ENCODE measurements at regions of chr6 and their contacts with region 1.

Region 1: GRCh38 chr6:159042003-159042825 is 2.6 kb downstream of the TAGAP start:
- DNase-seq: peak; percentile 62 to 95
- ATAC-seq: peak; percentile 43 to 75 (median 56)
- H3K4me3 ChIP-seq: peak overlapping the region; percentile 61
- H3K4me3 Mint-ChIP-seq: peak overlapping the region; percentile 98
- H3K27ac ChIP-seq: peak overlapping the region; percentile 87
- H3K27ac Mint-ChIP-seq: peak overlapping the region; percentile 97
- H3K4me1 ChIP-seq: peaks cover 53% of the 10 kb centered on the region
- H3K4me1 Mint-ChIP-seq: peaks cover 74 to 75% of the 10 kb centered on the region in 2 donors
- H3K27me3 ChIP-seq: no peaks in the 10 kb centered on the region
- H3K27me3 Mint-ChIP-seq: no peaks in the 10 kb centered on the region
- CTCF ChIP-seq: peak; percentile 99

Region 2: GRCh38 chr6:157148391-157149323 is 1893.6 kb before region 1 on chr6:
- intact Hi-C with region 1: loop called (anchors 10 kb)
- DNase-seq: no peak
- ATAC-seq: no peak
- H3K4me3 ChIP-seq: no peak overlapping the region
- H3K4me3 Mint-ChIP-seq: peak overlapping the region; percentile 75
- H3K27ac ChIP-seq: no peak overlapping the region
- H3K27ac Mint-ChIP-seq: peak overlapping the region; percentile 82 to 83
- H3K4me1 ChIP-seq: peaks cover 33% of the 10 kb centered on the region
- H3K4me1 Mint-ChIP-seq: peaks cover 40 to 44% of the 10 kb centered on the region in 2 donors
- H3K27me3 ChIP-seq: no peaks in the 10 kb centered on the region
- H3K27me3 Mint-ChIP-seq: no peaks in the 10 kb centered on the region
- CTCF ChIP-seq: no peak

Region 3: GRCh38 chr6:158649289-158650143 is 392.7 kb before region 1 on chr6 and contains the start of gene SYTL3:
- intact Hi-C with region 1: loop called (anchors 1 kb)
- DNase-seq: peak; percentile 62 to 95
- ATAC-seq: peak; percentile 47 to 73 (median 60)
- H3K4me3 ChIP-seq: peak within 1 kb of the TSS; percentile 41
- H3K4me3 Mint-ChIP-seq: peak within 1 kb of the TSS; percentile 87
- H3K27ac ChIP-seq: peak within 1 kb of the TSS; percentile 84
- H3K27ac Mint-ChIP-seq: peak within 1 kb of the TSS; percentile 96 to 99
- H3K4me1 ChIP-seq: peaks cover 66% of the 10 kb centered on the region
- H3K4me1 Mint-ChIP-seq: peaks cover 57 to 62% of the 10 kb centered on the region in 2 donors
- H3K27me3 ChIP-seq: no peaks in the 10 kb centered on the region
- H3K27me3 Mint-ChIP-seq: no peaks in the 10 kb centered on the region
- CTCF ChIP-seq: no peak
- total RNA-seq, gene SYTL3: 84.1 to 143 (median 89.0) TPM

Region 4: DNA sequence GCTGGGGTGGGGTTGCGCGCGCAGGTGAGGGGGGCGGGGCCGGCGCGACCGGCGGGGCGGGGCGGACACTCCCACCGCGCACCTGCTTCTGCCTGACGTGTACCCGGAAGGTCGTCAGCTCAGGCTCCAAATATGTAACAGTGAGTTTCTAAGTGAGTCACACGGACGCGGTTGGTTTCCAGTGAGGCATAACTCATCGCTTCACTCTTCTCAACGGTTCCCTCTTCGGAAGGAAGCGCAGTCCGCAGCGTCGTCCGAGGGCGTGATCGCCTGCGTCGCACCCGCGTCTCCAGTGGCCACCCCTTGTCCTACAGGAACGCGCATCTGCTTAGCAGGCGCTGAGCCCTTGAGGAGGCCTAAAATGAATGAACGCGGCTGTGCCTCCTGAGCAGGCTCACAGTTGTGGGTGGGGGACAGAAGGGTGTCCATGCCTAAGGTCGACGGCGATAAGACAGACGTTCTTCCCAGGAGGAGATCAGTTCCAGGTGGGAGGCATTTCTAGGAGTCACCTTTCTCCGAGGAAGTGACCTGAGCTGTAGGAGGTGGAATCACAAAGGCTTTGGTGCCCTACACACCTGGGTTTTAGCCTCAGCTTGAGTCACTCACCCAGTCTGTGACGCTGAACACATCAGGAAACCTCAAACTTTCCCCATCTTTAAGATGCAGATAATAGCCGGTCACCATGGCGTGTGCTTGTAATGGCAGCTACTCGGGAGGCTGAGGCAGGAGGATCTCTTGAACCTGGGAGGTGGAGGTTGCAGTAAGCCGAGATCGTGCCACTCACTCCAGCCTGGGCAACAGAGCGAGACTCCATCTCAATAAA is 172.2 kb before region 1 on chr6:
- intact Hi-C with region 1: loop called (anchors 2 kb)
- DNase-seq: peak; percentile 83 to 98
- ATAC-seq: peak; percentile 73 to 91 (median 80)
- H3K4me3 ChIP-seq: peak overlapping the region; percentile 47
- H3K4me3 Mint-ChIP-seq: peak overlapping the region; percentile 92
- H3K27ac ChIP-seq: peak overlapping the region; percentile 90
- H3K27ac Mint-ChIP-seq: peak overlapping the region; percentile 98 to 100
- H3K4me1 ChIP-seq: peaks cover 30% of the 10 kb centered on the region
- H3K4me1 Mint-ChIP-seq: peaks cover 34 to 39% of the 10 kb centered on the region in 2 donors
- H3K27me3 ChIP-seq: no peaks in the 10 kb centered on the region
- H3K27me3 Mint-ChIP-seq: peaks cover 2 to 7% of the 10 kb centered on the region in 2 donors
- CTCF ChIP-seq: no peak

Region 5: DNA sequence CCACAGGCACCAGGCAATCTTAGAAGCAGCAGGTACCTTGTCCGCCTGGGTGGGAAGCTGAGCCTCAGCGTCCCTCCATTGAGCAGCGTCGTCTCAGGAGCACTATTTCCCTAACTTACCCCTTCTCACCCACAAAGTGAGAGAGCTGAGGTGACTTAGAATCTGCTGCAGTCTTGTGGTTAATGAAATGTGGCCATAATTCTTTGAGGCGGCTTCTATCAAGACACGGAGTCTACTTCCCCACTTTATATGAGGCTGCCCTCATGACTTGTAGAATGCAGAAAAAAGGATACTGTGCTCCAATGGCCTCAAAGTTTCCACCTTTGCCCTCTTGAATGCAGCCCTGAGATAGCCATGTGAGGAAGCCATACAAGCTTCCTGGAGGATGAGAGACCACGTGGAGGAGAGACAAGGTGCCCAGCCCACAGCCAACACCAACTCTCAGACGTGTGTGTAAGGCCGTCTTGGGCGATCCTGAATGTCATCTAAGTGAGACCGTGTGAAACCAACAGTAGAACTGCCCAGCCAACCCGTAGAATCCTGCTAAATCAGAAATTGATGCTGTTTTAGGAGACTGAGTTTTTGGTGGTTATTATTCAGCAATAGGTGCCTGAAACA is 11.7 kb after region 1 on chr6:
- intact Hi-C with region 1: loop called (anchors 1 kb)
- DNase-seq: peak; percentile 32 to 73
- ATAC-seq: peak; percentile 77 to 88 (median 79)
- H3K4me3 ChIP-seq: no peak overlapping the region
- H3K4me3 Mint-ChIP-seq: peak overlapping the region; percentile 84
- H3K27ac ChIP-seq: peak overlapping the region; percentile 47
- H3K27ac Mint-ChIP-seq: peak overlapping the region; percentile 80 to 81
- H3K4me1 ChIP-seq: peaks cover 47% of the 10 kb centered on the region
- H3K4me1 Mint-ChIP-seq: peaks cover 47 to 53% of the 10 kb centered on the region in 2 donors
- H3K27me3 ChIP-seq: no peaks in the 10 kb centered on the region
- H3K27me3 Mint-ChIP-seq: no peaks in the 10 kb centered on the region
- CTCF ChIP-seq: no peak

Region 6: DNA sequence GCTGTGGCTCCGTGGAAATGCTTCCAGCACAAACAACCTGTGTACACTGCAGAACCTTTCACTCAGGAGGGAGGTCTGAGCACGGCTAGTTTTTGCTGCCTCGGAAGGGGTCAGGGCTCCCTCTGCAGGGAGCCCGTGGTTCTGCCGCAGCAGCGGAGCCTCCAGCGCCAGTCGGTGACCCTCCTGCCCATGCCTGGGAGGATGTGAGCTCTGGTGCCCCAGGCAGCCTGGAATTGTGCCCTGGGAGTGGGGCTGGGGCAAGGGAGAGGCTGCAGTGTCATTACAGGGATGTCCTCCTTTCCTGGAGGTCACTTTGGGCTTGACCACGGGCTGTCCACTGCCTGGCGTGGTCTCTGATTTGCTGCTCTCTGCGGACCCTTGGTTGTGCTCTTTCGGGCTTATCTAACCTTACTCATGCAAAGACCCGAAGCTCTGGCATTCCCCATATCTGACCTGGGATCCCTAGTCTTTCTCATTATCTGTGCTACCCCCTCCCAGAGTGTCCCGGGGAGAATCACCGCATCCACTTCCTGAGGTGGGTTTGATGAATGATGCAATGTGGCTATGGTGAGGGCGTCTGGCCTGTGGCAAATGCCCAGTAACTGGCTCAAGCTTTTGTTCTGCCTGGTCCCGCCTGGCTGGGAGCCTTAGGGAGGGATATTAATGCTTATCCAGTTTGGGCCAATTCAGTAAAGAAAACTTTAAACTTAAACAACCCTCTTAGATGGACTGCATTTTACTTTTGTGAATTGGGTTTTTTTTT is 62.1 kb after region 1 on chr6:
- intact Hi-C with region 1: loop called (anchors 1 kb)
- DNase-seq: peak; percentile 72 to 92
- ATAC-seq: peak; percentile 68 to 81 (median 68)
- H3K4me3 ChIP-seq: no peak overlapping the region
- H3K4me3 Mint-ChIP-seq: peak overlapping the region; percentile 67
- H3K27ac ChIP-seq: peak overlapping the region; percentile 71
- H3K27ac Mint-ChIP-seq: peak overlapping the region; percentile 83 to 95
- H3K4me1 ChIP-seq: peaks cover 61% of the 10 kb centered on the region
- H3K4me1 Mint-ChIP-seq: peaks cover 56 to 62% of the 10 kb centered on the region in 2 donors
- H3K27me3 ChIP-seq: no peaks in the 10 kb centered on the region
- H3K27me3 Mint-ChIP-seq: no peaks in the 10 kb centered on the region
- CTCF ChIP-seq: peak; percentile 94

Region 7: GRCh38 chr6:159137676-159138075 is 95.5 kb after region 1 on chr6:
- intact Hi-C with region 1: no loop called
- DNase-seq: no peak
- ATAC-seq: no peak
- H3K4me3 ChIP-seq: no peak overlapping the region
- H3K4me3 Mint-ChIP-seq: no peak overlapping the region
- H3K27ac ChIP-seq: no peak overlapping the region
- H3K27ac Mint-ChIP-seq: no peak overlapping the region
- H3K4me1 ChIP-seq: peaks cover 4% of the 10 kb centered on the region
- H3K4me1 Mint-ChIP-seq: peaks cover 6 to 12% of the 10 kb centered on the region in 2 donors
- H3K27me3 ChIP-seq: no peaks in the 10 kb centered on the region
- H3K27me3 Mint-ChIP-seq: peaks cover 7 to 14% of the 10 kb centered on the region in 2 donors
- CTCF ChIP-seq: no peak

Region 8: GRCh38 chr6:160462551-160463109 is 1420.4 kb after region 1 on chr6:
- intact Hi-C with region 1: loop called (anchors 5 kb)
- DNase-seq: peak; percentile 44 to 90
- ATAC-seq: peak; percentile 69 to 94 (median 86)
- H3K4me3 ChIP-seq: no peak overlapping the region
- H3K4me3 Mint-ChIP-seq: peak overlapping the region; percentile 83
- H3K27ac ChIP-seq: peak overlapping the region; percentile 61
- H3K27ac Mint-ChIP-seq: peak overlapping the region in 1 of 2 donors; percentile 90
- H3K4me1 ChIP-seq: peaks cover 65% of the 10 kb centered on the region
- H3K4me1 Mint-ChIP-seq: peaks cover 30 to 34% of the 10 kb centered on the region in 2 donors
- H3K27me3 ChIP-seq: no peaks in the 10 kb centered on the region
- H3K27me3 Mint-ChIP-seq: no peaks in the 10 kb centered on the region
- CTCF ChIP-seq: no peak

Measured in natural killer cell (primary cell).